Colonic mucosa (tissue), 4 donors: ENCODE measurements at regions of chr18 and their contacts with region 1.

Region 1: DNA sequence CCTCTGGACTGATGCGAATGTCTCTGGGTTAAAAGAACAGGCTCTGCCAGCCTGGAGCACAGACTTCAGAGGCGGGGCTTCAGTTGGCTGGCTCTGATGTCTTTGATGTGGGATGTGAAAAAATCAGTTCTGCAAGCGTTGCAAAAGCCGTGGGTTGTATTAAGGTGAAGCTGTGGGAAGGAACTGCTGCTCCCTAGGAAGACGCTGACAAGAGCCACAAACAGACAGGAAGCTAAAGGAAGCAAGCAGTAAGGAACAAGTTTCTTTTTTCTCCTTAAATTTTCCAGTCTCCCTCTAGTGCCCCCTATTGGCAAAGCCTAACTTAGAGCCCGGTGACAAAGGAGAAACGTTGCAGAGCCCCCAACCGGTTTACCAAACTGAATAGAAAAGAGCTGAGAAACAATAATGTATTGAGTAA is 239.0 kb downstream of the CCDC178 start:
- DNase-seq: peak; percentile 38
- H3K4me3 ChIP-seq: no peak overlapping the region
- H3K27ac ChIP-seq: no peak overlapping the region
- H3K4me1 ChIP-seq: no peaks in the 10 kb centered on the region
- H3K27me3 ChIP-seq: no peaks in the 10 kb centered on the region
- CTCF ChIP-seq: peak; percentile 35

Region 2: DNA sequence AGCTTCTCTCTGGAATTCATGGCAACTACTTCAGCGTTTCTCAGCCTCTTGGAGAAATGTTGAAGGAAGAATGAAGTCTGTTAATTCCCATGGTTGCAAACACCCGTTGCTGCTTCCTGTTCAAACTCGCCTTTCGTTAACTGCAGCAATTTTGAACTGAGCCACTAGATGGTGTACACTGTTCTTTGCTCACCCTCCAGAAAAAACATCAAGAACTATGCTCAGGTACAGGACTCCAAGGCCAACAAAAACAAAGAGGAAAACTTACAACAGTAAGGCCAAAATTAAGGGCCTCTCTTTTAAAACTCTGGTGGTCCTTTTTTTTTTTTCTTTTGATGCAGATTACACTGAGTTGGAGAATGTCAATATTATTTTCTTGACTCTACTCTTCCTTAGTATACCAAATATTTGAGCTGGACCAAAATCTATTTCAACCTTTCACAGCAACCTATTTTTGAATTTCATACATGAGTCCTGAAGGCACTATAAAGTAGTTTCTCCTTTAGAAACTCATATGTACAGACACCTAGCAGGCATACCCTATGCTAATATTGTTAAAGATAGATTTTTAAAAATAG is 486.9 kb before region 1 on chr18:
- intact Hi-C with region 1: loop called (anchors 5 kb)
- DNase-seq: peak; percentile 58
- H3K4me3 ChIP-seq: no peak overlapping the region
- H3K27ac ChIP-seq: no peak overlapping the region
- H3K4me1 ChIP-seq: no peaks in the 10 kb centered on the region
- H3K27me3 ChIP-seq: no peaks in the 10 kb centered on the region
- CTCF ChIP-seq: peak; percentile 46

Region 3: GRCh38 chr18:32893915-32894314 is 307.6 kb before region 1 on chr18:
- intact Hi-C with region 1: loop called (anchors 10 kb)
- DNase-seq: no peak
- H3K4me3 ChIP-seq: no peak overlapping the region
- H3K27ac ChIP-seq: no peak overlapping the region
- H3K4me1 ChIP-seq: no peaks in the 10 kb centered on the region
- H3K27me3 ChIP-seq: no peaks in the 10 kb centered on the region
- CTCF ChIP-seq: no peak

Region 4: GRCh38 chr18:32937007-32937540 is 264.4 kb before region 1 on chr18:
- intact Hi-C with region 1: no loop called
- DNase-seq: no peak
- H3K4me3 ChIP-seq: no peak overlapping the region
- H3K27ac ChIP-seq: no peak overlapping the region
- H3K4me1 ChIP-seq: no peaks in the 10 kb centered on the region
- H3K27me3 ChIP-seq: no peaks in the 10 kb centered on the region
- CTCF ChIP-seq: no peak